ENCODE measurements at regions of chr13 and their contacts with region 1.

Region 1: GRCh38 chr13:21318891-21319532 is 140.1 kb downstream of the ZDHHC20 start:
- DNase-seq: no peak
- H3K4me3 ChIP-seq: peak overlapping the region; percentile 4 to 32 (median 20)
- H3K27ac ChIP-seq: no peak overlapping the region
- H3K4me1 ChIP-seq: no peaks in the 10 kb centered on the region
- H3K27me3 ChIP-seq: no peaks in the 10 kb centered on the region
- CTCF ChIP-seq: no peak
- POLR2A ChIP-seq: no peak

Region 2: GRCh38 chr13:21385710-21386109 is 66.7 kb after region 1 on chr13:
- intact Hi-C with region 1: loop called (anchors 2 kb)
- DNase-seq: no peak
- H3K4me3 ChIP-seq: no peak overlapping the region
- H3K27ac ChIP-seq: no peak overlapping the region
- H3K4me1 ChIP-seq: no peaks in the 10 kb centered on the region
- H3K27me3 ChIP-seq: no peaks in the 10 kb centered on the region
- CTCF ChIP-seq: no peak
- POLR2A ChIP-seq: no peak

Region 3: DNA sequence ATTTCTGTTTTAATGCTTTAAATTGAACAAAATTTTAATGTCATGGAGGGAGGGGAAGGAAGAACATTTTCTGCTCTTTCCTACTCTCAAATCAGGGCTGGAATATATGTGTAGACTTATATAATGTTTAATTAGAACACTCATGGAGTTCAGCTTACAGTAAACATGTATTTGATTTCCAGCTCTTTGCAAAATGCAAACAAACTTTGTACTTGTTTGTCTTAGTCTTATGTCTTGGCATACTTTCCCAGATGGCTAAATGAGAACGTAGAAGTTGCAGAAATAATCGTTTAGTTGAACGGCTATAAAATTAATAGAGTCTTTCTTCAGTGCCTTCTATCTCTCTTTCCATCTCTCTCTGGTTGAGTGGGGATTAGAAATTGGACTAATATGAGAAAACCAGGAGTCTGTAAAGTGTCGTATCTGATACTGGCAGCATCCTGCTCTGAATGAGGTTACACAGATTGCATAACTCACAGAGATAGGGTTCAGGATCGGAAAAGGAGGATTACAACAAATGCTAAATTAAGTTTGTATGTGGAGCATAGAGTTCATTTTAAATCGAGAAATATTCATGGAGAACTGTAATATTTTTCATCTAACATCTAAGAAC is 434.2 kb after region 1 on chr13:
- intact Hi-C with region 1: loop called (anchors 5 kb)
- DNase-seq: no peak
- H3K4me3 ChIP-seq: no peak overlapping the region
- H3K27ac ChIP-seq: no peak overlapping the region
- H3K4me1 ChIP-seq: no peaks in the 10 kb centered on the region
- H3K27me3 ChIP-seq: no peaks in the 10 kb centered on the region
- CTCF ChIP-seq: no peak
- POLR2A ChIP-seq: no peak

Measured in breast epithelium (tissue), 4 donors.